Activated T-helper 1 cell treated with anti-CD3 and anti-CD28 coated beads, Interleukin-12 subunit alpha, Interleukin-12 subunit beta, Interleukin-2, Interleukin-4 antibody, amounts not matched to agents 30 ng/mL and 10 ng/mL and 1 ng/mL, durations not matched to agents 14 hours and 24 hours and 36 hours (primary cell): ENCODE measurements at regions of chr6 and their contacts with region 1.

Region 1: GRCh38 chr6:32177788-32178546 is at the start of gene RNF5:
- DNase-seq: peak; percentile 91
- H3K4me3 Mint-ChIP-seq: peak within 1 kb of the TSS; percentile 95
- H3K27ac Mint-ChIP-seq: peak within 1 kb of the TSS; percentile 94
- H3K4me1 Mint-ChIP-seq: peaks cover 60% of the 10 kb centered on the region
- H3K27me3 Mint-ChIP-seq: no peaks in the 10 kb centered on the region
- total RNA-seq, gene RNF5: 58.1 and 60.4 TPM in 2 replicates

Region 2: DNA sequence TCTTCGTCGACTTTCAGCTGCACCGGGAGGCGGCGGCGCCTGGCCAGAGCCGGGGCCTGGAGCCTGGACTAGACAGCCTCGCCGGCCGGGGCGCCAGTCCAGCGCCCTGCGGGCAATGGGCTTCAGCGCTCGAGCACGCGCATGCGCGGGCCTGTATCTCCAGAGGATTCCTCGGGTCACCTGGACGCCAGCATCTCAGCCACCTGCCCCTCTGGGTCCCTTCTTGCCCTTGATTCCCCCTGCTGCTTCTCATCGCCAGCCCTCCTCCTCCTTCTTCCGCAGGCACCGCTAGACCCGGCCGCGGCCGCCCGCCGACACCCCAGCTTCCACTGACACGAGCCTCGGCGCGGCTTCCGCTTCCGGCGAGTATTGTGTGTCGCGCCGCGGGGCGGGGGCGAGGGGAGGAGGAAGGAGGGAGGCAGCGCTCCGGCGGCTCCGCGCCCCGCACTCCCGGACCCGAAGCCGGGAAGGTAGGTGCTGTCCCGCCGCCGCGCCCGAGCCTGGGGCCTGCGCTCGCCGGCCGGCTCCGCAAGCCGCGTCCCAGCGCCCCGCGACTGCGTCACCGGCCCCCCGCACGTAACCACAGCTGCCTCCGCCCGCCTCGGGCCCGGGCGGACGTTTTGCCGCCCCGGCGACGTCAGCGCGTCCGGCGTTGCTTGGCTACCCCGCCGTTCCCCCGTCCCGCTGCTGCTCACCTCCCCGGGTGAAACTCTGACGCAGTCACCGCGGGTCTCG is 1851.3 kb before region 1 on chr6 and contains the start of gene TRIM39:
- intact Hi-C with region 1: loop called (anchors 5 kb)
- DNase-seq: peak; percentile 85
- H3K4me3 Mint-ChIP-seq: peak within 1 kb of the TSS; percentile 99
- H3K27ac Mint-ChIP-seq: peak within 1 kb of the TSS; percentile 100
- H3K4me1 Mint-ChIP-seq: peaks cover 54% of the 10 kb centered on the region
- H3K27me3 Mint-ChIP-seq: no peaks in the 10 kb centered on the region
- total RNA-seq, gene TRIM39: 14.2 and 15.6 TPM in 2 replicates

Region 3: DNA sequence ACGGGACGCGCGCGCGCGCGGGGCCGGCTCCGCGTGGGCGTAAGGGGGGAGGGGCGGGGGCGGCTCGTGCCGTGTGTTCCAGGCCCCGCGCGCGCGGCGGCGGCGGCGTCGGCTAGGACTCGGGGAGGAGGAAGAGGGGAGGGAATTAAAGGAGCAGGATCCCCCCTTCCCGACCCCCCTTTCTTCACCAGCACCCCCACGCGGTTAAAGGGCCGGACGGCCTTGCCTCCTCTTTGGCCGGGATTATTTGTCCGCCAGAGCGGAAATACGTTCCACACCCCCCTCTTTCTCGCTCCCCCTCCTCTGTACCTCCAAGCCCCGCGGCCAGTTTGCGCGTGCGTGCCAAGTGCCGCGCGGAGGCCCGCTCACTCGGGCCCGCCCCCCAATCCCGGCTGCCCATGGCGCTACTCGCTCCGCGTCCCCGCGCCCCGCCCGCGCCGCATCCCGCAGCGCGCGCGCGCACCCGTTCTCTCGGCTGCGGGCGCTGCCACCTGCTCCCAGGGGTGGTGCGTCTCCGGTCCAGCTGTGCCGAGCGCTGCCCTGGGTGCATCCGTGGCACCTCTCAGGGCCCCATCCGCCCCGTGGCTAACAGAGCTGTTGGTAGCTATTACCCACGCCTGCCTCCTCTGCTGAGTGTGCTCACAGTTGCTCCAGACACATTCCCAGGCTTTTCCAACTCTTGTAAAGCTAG is 275.9 kb before region 1 on chr6 and contains the start of gene ZBTB12:
- intact Hi-C with region 1: loop called (anchors 5 kb)
- DNase-seq: peak; percentile 82
- H3K4me3 Mint-ChIP-seq: peak within 1 kb of the TSS; percentile 81
- H3K27ac Mint-ChIP-seq: peak within 1 kb of the TSS; percentile 88
- H3K4me1 Mint-ChIP-seq: peaks cover 37% of the 10 kb centered on the region
- H3K27me3 Mint-ChIP-seq: no peaks in the 10 kb centered on the region
- total RNA-seq, gene ZBTB12: 4.6 and 5.1 TPM in 2 replicates

Region 4: GRCh38 chr6:32127717-32128592 is 50.0 kb before region 1 on chr6 and contains the start of gene ATF6B:
- intact Hi-C with region 1: loop called (anchors 1 kb)
- DNase-seq: peak; percentile 95
- H3K4me3 Mint-ChIP-seq: peak within 1 kb of the TSS; percentile 99
- H3K27ac Mint-ChIP-seq: peak within 1 kb of the TSS; percentile 94
- H3K4me1 Mint-ChIP-seq: peaks cover 45% of the 10 kb centered on the region
- H3K27me3 Mint-ChIP-seq: peaks cover 2% of the 10 kb centered on the region
- total RNA-seq, gene ATF6B: 80.1 and 97.6 TPM in 2 replicates

Region 5: DNA sequence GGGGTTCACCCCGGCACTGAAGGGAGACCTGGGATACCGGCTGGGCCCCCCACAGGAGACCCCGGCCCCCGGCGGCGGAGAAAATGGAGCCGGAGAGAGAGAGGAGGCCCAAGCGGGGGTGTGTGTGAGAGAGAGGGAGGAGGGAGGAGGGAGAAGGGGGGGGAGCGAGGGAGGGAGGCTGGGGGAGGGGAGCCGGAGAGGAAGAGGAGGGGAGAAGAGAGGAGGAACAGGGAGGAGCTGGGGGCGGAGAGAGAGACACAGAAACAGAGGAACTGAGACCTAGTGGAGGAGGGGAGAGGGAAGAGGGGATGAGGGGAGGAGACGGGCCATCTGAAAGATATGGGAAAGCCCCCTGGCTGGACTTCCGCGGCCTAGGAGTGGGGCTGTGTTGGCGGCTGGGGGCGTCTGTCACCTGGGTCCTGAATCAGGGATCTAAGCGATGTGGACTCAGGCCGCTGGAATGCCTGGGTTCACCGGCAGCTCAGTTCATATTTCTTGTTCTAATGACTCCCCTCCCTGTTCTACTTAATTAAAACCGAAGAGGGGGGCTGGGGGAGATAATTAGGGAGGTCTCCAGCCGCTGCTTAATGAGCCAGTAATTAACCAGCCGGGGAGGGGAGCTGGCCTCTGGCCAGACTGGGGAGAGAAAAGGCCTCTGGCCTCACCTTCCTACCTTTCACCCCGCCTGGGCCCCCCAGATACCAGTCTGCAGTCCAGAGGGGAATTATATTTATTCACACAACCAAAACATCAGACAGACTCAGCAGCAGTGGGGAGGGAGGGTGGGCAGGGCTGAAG is 12.3 kb after region 1 on chr6 and contains the start of gene PBX2:
- intact Hi-C with region 1: loop called (anchors 1 kb)
- DNase-seq: peak; percentile 75
- H3K4me3 Mint-ChIP-seq: peak within 1 kb of the TSS; percentile 97
- H3K27ac Mint-ChIP-seq: peak within 1 kb of the TSS; percentile 97
- H3K4me1 Mint-ChIP-seq: peaks cover 72% of the 10 kb centered on the region
- H3K27me3 Mint-ChIP-seq: no peaks in the 10 kb centered on the region
- total RNA-seq, gene PBX2: 91.9 and 94.0 TPM in 2 replicates

Region 6: GRCh38 chr6:32271429-32271828 is 93.5 kb after region 1 on chr6:
- intact Hi-C with region 1: no loop called
- DNase-seq: no peak
- H3K4me3 Mint-ChIP-seq: peak overlapping the region; percentile 0
- H3K27ac Mint-ChIP-seq: peak overlapping the region; percentile 16
- H3K4me1 Mint-ChIP-seq: peaks cover 26% of the 10 kb centered on the region
- H3K27me3 Mint-ChIP-seq: peaks cover 9% of the 10 kb centered on the region

Region 7: DNA sequence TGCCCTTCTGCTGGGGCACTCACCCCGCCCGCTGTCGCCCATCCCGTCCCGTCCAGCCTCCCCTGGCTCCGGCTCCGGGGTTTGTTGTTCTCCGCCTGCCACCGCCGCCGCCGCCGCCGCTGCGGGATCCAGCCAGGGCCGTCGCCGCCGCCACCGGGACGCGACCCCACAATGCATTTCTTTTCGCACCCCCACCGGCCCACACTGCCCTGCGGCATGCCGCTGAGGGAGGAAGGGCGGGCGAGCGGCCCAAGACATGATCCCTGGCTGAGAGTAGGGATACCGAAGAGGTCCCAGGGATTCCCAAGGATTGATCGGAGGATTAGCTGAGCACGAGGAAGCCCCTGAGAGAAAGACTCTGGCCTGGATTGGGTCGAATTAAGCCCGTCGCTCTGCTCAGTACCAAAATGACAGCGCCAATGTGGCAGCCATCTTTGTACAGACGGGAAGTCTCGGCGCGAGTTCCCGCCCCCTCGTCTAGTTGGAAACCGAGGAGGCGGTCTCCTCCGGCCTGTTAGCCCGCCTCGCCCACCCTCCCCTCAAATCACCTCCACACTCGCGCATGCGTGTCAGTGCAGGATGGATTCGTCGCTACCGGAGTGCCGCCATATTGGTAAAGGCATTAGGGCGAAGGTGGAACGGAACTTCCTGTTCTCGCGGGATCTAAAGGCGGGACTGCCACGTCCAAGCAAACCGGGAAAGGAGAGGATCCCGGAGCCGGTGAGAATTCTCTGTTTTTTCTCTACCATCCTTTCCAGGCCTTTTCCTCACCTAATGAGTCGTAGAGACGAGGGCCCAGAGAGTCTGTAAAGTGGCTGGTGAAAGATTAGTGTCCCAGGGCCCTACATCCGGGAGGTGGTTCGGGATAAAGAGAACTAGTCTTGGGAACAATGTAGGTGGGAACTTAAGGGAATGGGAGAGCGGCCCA is 1022.5 kb after region 1 on chr6 and contains the starts of genes RXRB and SLC39A7:
- intact Hi-C with region 1: loop called (anchors 2 kb)
- DNase-seq: peak; percentile 97
- H3K4me3 Mint-ChIP-seq: peak within 1 kb of the TSS; percentile 100
- H3K27ac Mint-ChIP-seq: peak within 1 kb of the TSS; percentile 97
- H3K4me1 Mint-ChIP-seq: peaks cover 75% of the 10 kb centered on the region
- H3K27me3 Mint-ChIP-seq: no peaks in the 10 kb centered on the region
- total RNA-seq, gene RXRB: 46.6 and 47.4 TPM in 2 replicates
- total RNA-seq, gene SLC39A7: 67.1 and 68.8 TPM in 2 replicates